Gastrocnemius medialis (tissue), 4 donors: ENCODE measurements at regions of chr9 and their contacts with region 1.

Region 1: DNA sequence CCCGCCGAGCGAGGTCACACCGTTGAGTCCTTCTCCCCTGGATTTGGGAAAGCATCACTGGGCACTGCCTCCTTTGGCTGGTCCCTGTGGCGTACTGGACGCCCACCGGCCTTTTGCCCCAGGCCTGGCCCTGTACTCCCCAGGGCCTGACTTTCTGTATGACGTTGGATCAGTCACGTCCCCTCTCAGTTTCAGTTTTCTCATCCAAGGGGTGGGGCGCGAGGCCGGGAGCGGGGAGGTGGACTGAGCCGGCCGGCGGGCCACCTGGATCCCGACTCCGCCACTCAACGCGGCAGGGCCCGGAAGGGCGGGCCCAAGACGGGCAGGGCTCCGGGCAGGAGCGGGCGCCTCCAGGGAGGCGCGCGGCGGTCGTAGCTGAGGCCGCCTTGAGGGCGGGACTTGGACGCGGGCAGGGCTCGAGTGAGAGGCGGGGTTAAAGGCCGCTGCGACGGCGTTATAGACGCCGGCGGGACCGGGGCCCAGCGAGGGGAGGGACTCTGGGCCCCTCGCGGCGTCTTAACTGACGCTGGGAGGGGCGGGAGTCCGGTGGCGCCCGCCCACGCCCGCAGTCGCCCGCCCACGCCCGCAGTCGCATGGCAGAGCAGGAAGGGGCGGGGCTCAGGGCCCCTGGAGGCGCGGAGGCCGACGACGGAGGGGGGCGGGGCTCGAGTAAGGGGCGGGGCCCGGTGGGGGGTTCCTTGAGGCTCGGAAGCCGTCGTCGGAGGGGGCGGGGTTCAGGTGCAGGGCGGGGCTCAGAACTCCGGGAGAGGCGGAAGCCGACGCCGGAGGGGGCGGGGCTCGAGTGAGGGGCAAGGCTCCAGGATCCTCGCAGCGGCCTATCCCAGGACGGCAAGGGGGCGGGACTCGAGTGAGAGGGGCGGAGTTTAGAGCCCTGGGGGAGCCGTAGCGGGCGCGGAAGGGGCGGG is 549 bp upstream of the CARD19 start:
- DNase-seq: peak; percentile 99 to 100
- ATAC-seq: peak; percentile 57 to 64
- H3K4me3 ChIP-seq: peak overlapping the region; percentile 67 to 96 (median 86)
- H3K27ac ChIP-seq: peak overlapping the region; percentile 91 to 100 (median 100)
- H3K4me1 ChIP-seq: peaks cover 35 to 43% of the 10 kb centered on the region in 2 donors
- H3K27me3 ChIP-seq: no peaks in the 10 kb centered on the region
- CTCF ChIP-seq: no peak
- POLR2A ChIP-seq: peak; percentile 80 to 88

Region 2: DNA sequence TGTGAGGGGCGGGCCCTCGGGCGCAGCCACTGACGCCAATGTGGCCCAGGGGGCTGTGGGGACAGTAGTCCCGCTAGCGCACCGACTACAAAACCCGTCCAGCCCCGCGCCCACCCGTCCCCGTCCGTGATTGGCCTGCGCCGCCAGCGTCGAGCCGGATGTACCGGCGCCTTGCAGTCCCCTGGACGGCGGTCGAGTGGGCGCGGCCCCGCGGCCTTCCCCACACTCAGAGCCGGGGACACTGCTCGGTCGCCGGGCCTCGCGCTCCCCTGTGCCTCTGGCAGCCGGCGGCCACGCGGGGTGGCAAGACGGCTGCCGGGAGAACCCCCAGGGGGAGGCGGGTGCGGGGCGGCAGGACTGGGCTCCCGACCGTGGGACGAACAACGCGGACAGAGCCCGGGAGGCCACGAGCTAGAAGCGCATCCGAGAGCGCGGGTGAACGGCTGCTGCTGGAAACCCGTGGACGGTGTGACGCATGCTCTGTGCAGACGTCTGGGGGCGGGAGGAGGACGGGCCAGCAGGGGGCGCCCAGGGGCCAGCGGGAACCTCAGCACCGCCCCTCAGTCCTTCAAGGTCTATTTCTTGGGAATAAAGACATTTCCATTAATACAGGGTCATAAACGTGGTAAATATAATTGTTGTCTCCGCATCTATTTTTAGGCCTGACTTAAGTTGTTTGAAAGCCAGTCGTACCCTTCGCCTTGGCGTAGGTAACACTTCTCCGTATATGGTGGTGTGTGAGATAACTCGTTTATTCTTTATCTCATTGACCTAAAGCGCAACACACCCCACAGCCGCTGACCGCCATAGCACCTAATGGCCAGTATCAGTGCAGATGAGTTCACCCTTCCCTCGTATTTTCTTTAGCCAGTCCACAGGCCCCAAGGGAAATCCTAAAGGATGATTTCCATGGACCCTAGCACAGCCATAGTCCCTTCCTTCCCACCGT is 330.2 kb before region 1 on chr9:
- in situ Hi-C with region 1: no loop called
- intact Hi-C with region 1: loop called (anchors 1 kb)
- DNase-seq: peak; percentile 99
- ATAC-seq: peak; percentile 84 to 86
- H3K4me3 ChIP-seq: peak overlapping the region; percentile 72 to 99 (median 94)
- H3K27ac ChIP-seq: peak overlapping the region; percentile 93 to 100 (median 98)
- H3K4me1 ChIP-seq: peaks cover 38 to 47% of the 10 kb centered on the region in 2 donors
- H3K27me3 ChIP-seq: no peaks in the 10 kb centered on the region
- CTCF ChIP-seq: peak; percentile 83 to 98 (median 96)
- POLR2A ChIP-seq: peak; percentile 80 to 82

Region 3: DNA sequence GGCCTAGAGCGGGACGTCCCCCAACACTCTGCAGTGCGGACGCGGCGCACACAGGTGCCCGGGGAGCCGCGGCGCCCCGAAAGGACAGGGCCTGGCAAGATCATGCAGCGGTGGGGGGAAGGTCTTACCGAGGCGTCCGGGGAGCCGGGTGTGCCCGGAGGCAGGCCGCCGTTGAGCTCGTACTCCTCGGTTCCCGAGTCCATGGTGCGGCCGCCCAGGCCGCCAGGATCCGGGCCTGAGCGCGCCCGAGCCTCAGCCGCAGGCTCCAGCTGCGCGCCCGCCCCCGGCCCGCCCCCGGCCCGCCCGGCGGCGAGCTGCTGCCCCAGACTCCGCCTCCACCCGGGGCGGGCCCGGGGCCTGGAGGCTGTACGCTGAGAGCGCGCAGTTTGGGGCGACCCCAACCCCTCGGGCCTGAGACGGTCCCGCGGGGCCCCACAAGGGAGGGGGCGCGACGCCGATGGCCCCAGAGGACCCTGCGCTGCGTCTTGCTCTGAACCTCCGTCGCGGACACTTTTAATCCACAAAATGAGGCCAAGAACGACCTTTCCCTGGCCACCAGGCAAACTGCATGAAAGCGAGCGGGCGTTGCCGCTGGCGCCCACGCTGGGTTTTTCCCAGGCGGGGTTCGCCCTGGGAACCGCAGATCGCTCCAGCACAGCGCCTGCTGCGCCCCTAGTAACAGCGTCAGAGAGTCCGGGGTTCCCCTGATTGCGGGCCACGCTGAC is 38.7 kb after region 1 on chr9 and contains the start of gene NINJ1:
- in situ Hi-C with region 1: no loop called
- intact Hi-C with region 1: loop called (anchors 5 kb)
- DNase-seq: peak; percentile 56 to 59
- ATAC-seq: peak; percentile 65 to 80
- H3K4me3 ChIP-seq: peak within 1 kb of the TSS; percentile 69 to 91 (median 86)
- H3K27ac ChIP-seq: peak within 1 kb of the TSS; percentile 95 to 99 (median 96)
- H3K4me1 ChIP-seq: peaks cover 57 to 63% of the 10 kb centered on the region in 2 donors
- H3K27me3 ChIP-seq: no peaks in the 10 kb centered on the region
- CTCF ChIP-seq: no peak
- POLR2A ChIP-seq: peak; percentile 87 to 94
- total RNA-seq, gene NINJ1: 28.5 to 58.5 (median 45.7) TPM

Region 4: DNA sequence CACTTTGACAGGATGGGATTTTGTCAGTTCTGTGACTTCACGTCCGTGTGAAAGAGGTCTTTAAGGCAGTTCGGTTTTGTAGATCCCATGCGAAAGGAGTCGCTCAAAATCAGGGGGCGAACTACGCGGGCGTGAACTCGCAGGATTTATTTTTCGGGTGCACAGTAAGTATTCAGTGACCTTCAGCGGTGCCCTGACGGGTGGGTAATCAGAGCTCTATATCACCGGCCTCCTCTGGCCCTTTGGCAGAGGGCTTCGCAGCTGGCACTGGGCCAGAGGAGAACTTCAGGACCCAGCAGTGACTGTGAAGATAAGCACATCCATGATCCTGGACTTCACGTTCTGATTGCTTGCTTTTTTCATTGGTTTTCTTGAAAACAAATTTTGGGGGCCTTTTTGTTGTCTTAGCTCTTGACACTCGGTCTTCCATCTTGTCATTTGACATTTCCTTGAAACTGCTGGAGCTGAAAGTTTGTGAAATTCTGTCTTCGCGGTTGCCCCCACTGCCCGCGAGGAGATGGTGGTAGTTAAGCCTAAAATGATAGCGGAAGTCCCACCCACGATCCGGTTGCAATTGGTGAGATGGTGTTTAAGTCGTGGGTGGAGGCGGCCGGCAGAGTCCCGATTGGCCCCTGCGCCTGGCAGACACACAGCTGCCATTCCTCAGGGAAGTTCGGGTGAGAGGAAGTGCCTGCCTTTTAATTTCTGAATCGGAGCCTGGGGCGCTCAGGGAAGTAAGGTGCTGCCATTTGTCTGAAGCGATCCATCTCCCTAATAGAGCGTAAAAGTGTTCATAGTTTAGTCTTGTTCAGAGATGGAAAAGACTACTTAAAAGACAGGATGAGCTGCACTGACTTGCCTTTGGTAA is 357.8 kb after region 1 on chr9 and contains the start of gene FAM120AOS:
- in situ Hi-C with region 1: loop called in 1 of 4 experiments (anchors 25 kb)
- intact Hi-C with region 1: loop called (anchors 2 kb)
- DNase-seq: peak; percentile 92 to 95
- ATAC-seq: peak; percentile 75 to 81
- H3K4me3 ChIP-seq: peak within 1 kb of the TSS; percentile 84 to 97 (median 94)
- H3K27ac ChIP-seq: peak within 1 kb of the TSS; percentile 93 to 99 (median 96)
- H3K4me1 ChIP-seq: peaks cover 44 to 58% of the 10 kb centered on the region in 2 donors
- H3K27me3 ChIP-seq: no peaks in the 10 kb centered on the region
- CTCF ChIP-seq: no peak
- POLR2A ChIP-seq: peak; percentile 79 to 84
- total RNA-seq, gene FAM120AOS: 22.8 to 49.5 (median 32.4) TPM

Region 5: DNA sequence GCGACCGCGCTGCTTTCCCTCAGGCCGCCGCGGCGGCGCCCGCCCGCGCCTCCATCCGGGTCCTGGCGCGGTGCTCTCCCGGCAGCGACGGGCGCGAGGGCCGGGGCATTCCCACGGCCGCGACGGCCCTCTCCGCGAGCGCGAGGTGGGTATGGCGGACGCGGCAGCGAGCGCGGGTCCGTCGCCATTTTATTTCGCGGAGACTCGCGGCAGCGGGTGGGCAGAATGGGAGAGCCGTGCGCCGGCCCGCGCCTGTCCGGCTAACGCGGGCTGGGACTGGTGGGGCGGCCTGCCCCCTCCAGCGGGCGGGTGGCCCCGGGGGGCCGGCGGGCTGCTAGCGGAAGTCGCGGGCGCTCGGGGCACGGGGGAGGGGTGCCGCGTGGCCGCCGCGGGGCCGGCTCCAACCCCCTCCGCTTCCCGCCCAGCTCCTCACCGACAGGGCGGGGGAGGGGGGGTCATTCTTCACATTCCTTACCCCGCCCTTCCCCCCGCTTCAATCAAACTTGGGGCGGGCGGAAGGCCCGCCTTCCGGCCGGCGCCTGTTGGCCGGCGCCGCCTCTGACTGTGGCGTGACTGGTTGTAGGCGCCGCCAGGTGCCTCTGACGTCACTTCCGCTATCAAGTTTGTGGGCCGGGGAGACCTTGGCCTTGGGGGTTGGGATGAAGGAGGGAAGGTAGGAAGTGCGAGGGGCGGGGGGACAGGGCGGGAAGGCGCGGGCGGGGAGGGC is 1070.9 kb after region 1 on chr9:
- in situ Hi-C with region 1: no loop called
- intact Hi-C with region 1: loop called (anchors 10 kb)
- DNase-seq: peak; percentile 98 to 99
- ATAC-seq: peak; percentile 79 to 85
- H3K4me3 ChIP-seq: peak overlapping the region; percentile 63 to 93 (median 73)
- H3K27ac ChIP-seq: peak overlapping the region; percentile 95 to 100 (median 99)
- H3K4me1 ChIP-seq: peaks cover 38 to 44% of the 10 kb centered on the region in 2 donors
- H3K27me3 ChIP-seq: no peaks in the 10 kb centered on the region
- CTCF ChIP-seq: peak in 4 of 5 experiments; percentile 32 to 47 (median 42)
- POLR2A ChIP-seq: peak; percentile 99 to 100